Head of caudate nucleus (tissue), 42 donors: ENCODE measurements at regions of chr12 and their contacts with region 1.

Region 1: DNA sequence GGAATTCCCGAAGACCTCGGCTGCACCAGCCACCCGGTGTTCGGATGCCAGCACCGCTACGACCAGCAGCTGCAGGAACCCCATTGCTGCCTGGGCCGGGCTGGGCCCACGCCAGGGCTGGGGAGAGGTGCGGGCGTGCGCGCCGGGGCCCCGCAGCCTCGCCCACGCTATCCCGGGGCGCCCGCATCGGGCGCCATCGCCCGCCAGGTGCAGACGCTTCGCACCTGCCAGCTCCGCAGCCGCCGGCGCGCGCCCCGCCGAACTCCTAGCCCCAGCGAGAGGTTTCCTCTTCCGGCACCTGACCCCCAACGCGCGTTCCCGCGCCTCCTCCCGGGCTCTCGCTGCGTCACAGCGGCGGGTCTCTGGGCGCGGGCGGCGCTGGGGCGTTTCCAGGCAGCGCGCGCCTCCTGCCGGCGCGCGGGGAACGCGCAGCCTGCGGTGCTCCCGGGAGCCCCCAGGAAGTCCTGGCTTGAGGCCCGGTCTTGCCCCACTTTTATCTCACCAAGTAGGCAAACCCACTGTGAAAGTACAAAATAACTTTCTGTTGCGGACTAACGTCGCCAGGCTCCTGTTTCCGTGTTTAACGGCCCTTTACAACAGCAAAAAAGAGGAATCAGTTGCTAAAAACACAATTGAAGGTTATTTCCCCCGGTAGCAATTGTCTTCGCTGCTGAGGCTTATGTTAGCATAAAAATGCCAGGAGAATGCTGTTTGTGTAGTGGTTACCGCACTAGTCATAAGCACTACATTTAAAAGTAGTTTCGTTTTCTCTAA is at the start of gene TM7SF3:
- DNase-seq: peak; percentile 79 to 97 (median 94)

Region 2: GRCh38 chr12:26853303-26854030 is 160.8 kb before region 1 on chr12:
- intact Hi-C with region 1: loop called (anchors 10 kb)
- DNase-seq: peak; percentile 57 to 90 (median 76)

Region 3: GRCh38 chr12:26918309-26919215 is 95.7 kb before region 1 on chr12:
- intact Hi-C with region 1: no loop called
- DNase-seq: no peak

Region 4: GRCh38 chr12:26937875-26938700 is 76.2 kb before region 1 on chr12 and contains the starts of genes FGFR1OP2 and INTS13:
- intact Hi-C with region 1: loop called (anchors 2 kb)
- DNase-seq: peak; percentile 94 to 99 (median 97)

Region 5: DNA sequence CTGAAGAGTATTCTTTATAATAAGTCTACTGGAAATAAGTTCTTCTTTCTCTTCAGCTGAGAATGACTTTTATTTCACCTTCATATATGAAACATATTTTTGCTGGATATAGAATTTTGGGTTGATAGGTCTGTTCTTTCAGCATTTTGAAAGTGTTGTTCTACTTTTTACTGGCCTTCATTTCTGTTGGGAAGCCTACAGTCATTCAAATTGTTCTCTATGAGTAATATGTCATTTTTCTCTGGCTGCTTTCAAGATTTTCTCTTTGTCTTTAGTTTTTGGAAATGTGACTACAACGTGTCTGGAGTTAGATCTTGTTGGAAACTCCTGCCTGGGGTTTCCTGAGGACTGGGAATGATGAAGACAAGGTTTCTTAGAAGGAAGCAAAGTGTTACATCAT is 66.0 kb before region 1 on chr12:
- intact Hi-C with region 1: no loop called
- DNase-seq: no peak

Region 6: GRCh38 chr12:27305673-27306456 is 291.6 kb after region 1 on chr12:
- intact Hi-C with region 1: loop called (anchors 10 kb)
- DNase-seq: no peak

Region 7: DNA sequence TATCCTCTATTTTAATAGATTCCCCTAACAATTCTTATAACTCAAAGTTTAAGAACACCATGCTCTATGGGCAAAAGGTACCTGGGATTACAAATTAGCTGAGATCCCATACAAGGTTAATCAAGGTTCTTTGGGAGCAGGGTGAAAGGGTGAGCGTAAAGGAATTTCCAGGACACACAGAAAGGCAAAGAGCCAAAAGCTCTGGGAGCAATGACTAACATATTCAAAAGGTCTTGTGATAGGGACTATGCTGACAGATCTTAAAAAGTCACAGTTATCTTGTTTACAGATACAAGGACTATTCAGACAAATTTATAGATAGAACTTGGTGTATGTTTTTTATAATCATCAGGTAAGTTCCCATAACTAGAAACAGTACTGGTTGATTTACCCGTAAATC is 490.2 kb after region 1 on chr12:
- intact Hi-C with region 1: no loop called
- DNase-seq: no peak